OCI-LY7 (cell line): ENCODE measurements at regions of chr19 and their contacts with region 1.

Region 1: GRCh38 chr19:21202865-21203494 is 61.1 kb downstream of the ZNF431 start:
- DNase-seq: peak; percentile 68
- H3K4me3 ChIP-seq: no peak overlapping the region
- H3K27ac ChIP-seq: no peak overlapping the region
- H3K4me1 ChIP-seq: no peaks in the 10 kb centered on the region
- CTCF ChIP-seq: peak; percentile 94

Region 2: DNA sequence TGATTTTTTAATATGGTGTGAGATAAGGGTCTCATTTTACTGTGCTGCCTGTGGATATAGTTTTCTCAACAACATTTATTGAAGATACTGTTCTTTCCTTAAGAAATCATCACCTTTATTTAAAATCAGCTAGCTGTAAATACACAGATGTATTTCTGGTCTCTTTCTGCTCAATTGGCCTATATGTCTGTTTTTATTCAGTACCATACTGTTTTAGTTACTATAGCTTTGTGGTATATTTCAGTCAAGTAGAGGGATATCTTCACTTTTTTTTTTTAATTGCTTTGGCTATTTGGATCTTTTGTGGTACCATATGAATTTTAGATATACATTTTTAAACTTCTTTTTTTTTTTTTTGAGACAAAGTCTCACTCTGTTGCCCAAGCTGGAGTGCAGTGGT is 137.6 kb before region 1 on chr19:
- CTCF ChIA-PET with region 1: no interaction called
- POLR2A ChIA-PET with region 1: no interaction called
- intact Hi-C with region 1: no loop called
- DNase-seq: no peak
- H3K4me3 ChIP-seq: no peak overlapping the region
- H3K27ac ChIP-seq: no peak overlapping the region
- H3K4me1 ChIP-seq: no peaks in the 10 kb centered on the region
- CTCF ChIP-seq: no peak

Region 3: DNA sequence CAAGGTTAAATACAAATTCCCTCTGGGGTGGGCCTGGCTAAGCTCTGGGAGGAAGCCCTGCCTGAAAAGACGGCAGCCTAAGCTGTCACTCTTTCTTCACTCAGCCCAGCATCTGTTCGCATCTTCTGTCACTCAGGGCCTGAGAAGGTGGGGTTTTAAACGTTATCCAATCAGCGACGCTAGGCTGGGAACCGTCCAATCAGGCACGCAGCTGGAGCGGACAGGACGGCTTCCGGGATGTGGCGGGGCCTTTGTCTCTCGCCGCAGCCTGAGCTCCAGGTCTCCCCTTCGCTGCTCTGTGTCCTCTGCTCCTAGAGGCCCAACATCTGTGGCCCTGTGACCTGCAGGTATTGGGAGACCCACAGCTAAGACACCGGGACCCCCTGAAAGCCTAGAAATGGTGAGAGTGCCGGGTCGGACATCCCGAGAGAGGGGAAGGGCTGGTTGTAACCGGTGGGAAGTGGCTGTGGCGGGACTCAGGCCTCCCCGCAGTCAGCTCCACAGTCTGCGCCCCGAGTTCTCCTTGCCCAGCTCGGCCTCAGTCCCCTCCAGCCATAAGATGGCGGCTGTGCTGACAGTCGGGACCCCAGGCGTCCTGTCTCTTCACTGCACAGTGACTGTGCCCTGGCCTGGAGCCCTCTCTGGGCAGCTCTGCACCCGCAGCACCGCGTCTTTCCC is 61.1 kb before region 1 on chr19 and contains the start of gene ZNF431:
- CTCF ChIA-PET with region 1: no interaction called
- POLR2A ChIA-PET with region 1: no interaction called
- intact Hi-C with region 1: no loop called
- DNase-seq: peak; percentile 96
- H3K4me3 ChIP-seq: peak within 1 kb of the TSS; percentile 92
- H3K27ac ChIP-seq: peak within 1 kb of the TSS; percentile 59
- H3K4me1 ChIP-seq: peaks cover 8% of the 10 kb centered on the region
- CTCF ChIP-seq: no peak
- total RNA-seq, gene ZNF431: 11.9 and 26.6 TPM in 2 replicates

Region 4: GRCh38 chr19:21158523-21159135 is 44.4 kb before region 1 on chr19:
- CTCF ChIA-PET with region 1: no interaction called
- POLR2A ChIA-PET with region 1: no interaction called
- intact Hi-C with region 1: no loop called
- DNase-seq: no peak
- H3K4me3 ChIP-seq: no peak overlapping the region
- H3K27ac ChIP-seq: no peak overlapping the region
- H3K4me1 ChIP-seq: no peaks in the 10 kb centered on the region
- CTCF ChIP-seq: no peak

Region 5: DNA sequence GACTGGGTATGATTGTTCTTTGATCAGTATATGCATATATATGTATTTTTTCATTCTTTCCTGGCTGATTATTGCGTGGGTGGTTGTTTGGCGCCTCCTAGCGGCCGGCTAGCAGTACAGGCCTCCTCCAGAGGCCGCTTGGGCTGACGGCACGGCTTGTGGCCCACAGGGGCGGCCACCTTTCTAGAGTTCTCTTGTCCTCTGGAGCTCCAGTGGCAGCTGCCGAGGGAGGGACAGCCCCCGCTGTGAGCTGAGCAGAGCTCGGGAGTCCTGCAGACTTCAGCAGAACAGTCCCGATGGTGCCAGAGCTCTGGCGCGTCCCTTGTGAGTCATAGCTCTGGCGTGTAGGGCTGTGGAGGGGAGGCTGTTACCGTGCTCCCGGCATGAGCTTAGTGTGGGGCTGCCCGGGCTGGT is 279.9 kb after region 1 on chr19:
- CTCF ChIA-PET with region 1: no interaction called
- POLR2A ChIA-PET with region 1: no interaction called
- intact Hi-C with region 1: loop called (anchors 1 kb)
- DNase-seq: peak; percentile 44
- H3K4me3 ChIP-seq: no peak overlapping the region
- H3K27ac ChIP-seq: no peak overlapping the region
- H3K4me1 ChIP-seq: no peaks in the 10 kb centered on the region
- CTCF ChIP-seq: peak; percentile 83

Region 6: DNA sequence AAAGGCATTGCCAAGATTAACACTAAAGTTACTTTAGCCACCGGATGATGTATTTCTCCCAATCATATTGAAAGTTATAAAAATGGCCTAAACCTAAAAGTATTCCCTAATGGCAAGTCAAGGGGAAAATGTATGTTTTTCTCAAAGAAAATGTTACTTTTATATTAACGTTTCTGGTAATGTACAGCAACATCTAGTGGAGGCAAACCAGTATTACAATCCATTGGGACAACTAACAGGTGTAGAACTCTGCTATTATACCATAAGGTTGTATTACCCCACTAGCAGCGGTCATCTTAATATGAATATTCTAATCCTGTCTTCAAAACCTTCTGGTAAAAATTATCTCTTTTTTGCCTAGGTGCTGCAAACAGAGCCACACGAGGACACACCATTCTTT is 495.2 kb after region 1 on chr19:
- CTCF ChIA-PET with region 1: no interaction called
- POLR2A ChIA-PET with region 1: no interaction called
- intact Hi-C with region 1: loop called (anchors 5 kb)
- DNase-seq: peak; percentile 48
- H3K4me3 ChIP-seq: no peak overlapping the region
- H3K27ac ChIP-seq: no peak overlapping the region
- H3K4me1 ChIP-seq: no peaks in the 10 kb centered on the region
- CTCF ChIP-seq: peak; percentile 81